ENCODE measurements at regions of chr9 and their contacts with region 1.

Region 1: GRCh38 chr9:88462226-88462625 is 72.8 kb upstream of the NXNL2 start:
- DNase-seq: no peak
- ATAC-seq: no peak

Region 2: GRCh38 chr9:88447431-88447830 is 14.8 kb before region 1 on chr9:
- intact Hi-C with region 1: loop called (anchors 2 kb)
- DNase-seq: no peak
- ATAC-seq: no peak

Region 3: DNA sequence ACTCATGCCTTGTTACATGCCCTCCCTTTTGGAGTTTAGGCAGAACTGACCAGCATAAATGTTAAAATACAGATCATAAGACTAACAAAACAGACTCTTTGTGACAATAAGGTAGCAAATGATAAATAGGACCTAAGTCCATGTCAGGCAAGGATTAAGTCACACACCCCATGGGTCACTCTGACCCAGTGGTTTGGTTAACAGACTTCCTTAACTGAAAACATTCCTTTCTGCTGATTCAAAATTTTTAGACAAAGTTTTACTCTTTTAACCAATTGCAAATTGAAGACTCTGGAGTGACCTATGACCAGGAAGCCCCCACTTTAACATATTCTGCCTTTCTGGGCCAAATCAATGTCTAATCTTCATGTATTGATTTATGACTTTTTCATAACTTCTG is 67.8 kb after region 1 on chr9:
- intact Hi-C with region 1: no loop called
- DNase-seq: no peak
- ATAC-seq: no peak

Region 4: GRCh38 chr9:88623698-88624097 is 161.5 kb after region 1 on chr9:
- intact Hi-C with region 1: no loop called
- DNase-seq: no peak
- ATAC-seq: no peak

Measured in Right ventricle myocardium superior (tissue), 1 donor.